Breast epithelium (tissue), 4 donors: ENCODE measurements at regions of chr6 and their contacts with region 1.

Region 1: GRCh38 chr6:28235912-28236452 is 10.9 kb downstream of the ZSCAN9 start:
- DNase-seq: no peak
- H3K4me3 ChIP-seq: no peak overlapping the region
- H3K27ac ChIP-seq: no peak overlapping the region
- H3K4me1 ChIP-seq: no peaks in the 10 kb centered on the region
- H3K27me3 ChIP-seq: no peaks in the 10 kb centered on the region
- CTCF ChIP-seq: no peak
- POLR2A ChIP-seq: no peak

Region 2: DNA sequence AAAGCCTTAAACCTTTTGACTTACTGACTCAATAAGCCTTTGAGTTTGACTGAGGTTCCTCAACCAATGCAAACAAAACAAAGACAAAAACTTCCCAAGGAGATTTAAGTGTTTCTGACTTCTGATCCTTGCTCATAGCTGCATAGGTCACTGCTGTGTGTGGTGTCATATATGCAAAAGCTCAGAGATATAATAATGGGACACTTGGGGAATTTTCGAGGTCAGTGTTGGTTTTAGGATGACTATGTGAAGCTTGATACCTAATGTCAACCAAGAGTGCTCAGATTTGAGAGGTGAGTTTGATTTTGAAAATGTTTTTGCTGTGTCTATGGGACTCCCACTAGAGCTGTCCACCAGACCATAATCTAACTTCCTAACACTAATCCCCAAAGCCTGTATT is 68.1 kb before region 1 on chr6:
- intact Hi-C with region 1: loop called (anchors 2 kb)
- DNase-seq: no peak
- H3K4me3 ChIP-seq: no peak overlapping the region
- H3K27ac ChIP-seq: no peak overlapping the region
- H3K4me1 ChIP-seq: no peaks in the 10 kb centered on the region
- H3K27me3 ChIP-seq: no peaks in the 10 kb centered on the region
- CTCF ChIP-seq: no peak
- POLR2A ChIP-seq: no peak

Region 3: DNA sequence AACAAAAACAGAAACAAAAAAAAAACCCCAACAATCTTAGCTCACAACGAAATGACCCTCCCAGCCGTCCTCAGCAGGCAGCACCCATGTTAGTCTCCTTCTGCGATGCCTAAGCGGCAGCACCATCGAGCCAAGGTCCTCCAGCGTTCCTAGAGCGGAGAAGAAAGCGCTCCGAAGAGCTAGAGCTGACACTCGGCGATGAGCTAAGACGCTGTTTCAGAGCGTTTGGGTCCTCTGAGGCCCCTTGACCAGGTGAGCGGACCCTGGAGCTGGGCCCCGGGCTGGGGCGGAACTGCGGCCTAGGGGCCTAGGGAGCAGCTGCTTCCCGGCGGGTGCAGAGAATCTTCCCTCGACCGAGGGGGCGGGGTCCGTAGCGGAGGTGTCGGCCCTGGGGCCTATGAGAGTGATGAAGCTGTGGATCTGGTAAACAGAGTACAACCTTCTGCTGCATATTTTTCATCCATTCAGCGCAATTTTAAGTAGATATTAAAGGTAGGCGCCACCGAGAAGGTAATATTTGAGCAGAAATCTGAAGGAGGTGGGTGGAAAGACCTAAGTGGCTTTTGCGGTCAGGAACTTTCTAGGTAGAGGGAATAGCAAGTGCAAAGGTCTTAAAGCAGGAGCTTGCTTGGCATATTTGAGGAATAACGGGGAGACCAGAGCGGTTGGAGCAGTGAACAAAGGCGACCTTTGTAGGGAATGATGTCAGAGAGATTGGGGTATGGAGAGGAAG is 31.1 kb after region 1 on chr6 and contains the start of gene ZSCAN26:
- intact Hi-C with region 1: loop called (anchors 2 kb)
- DNase-seq: peak; percentile 54 to 72
- H3K4me3 ChIP-seq: peak within 1 kb of the TSS; percentile 74 to 90 (median 75)
- H3K27ac ChIP-seq: peak within 1 kb of the TSS; percentile 91 to 96
- H3K4me1 ChIP-seq: peaks cover 0 to 9% of the 10 kb centered on the region in 2 donors
- H3K27me3 ChIP-seq: no peaks in the 10 kb centered on the region
- CTCF ChIP-seq: no peak
- POLR2A ChIP-seq: no peak
- total RNA-seq, gene ZSCAN26: 13.8 to 31.1 (median 25.8) TPM